MCF 10A (cell line): ENCODE measurements at regions of chr1 and their contacts with region 1.

Region 1: GRCh38 chr1:245322673-245323441 is 168.1 kb downstream of the KIF26B start:
- DNase-seq: peak; percentile 55
- H3K4me3 Mint-ChIP-seq: no peak overlapping the region
- H3K27ac Mint-ChIP-seq: no peak overlapping the region
- H3K4me1 Mint-ChIP-seq: no peaks in the 10 kb centered on the region
- H3K27me3 Mint-ChIP-seq: peaks cover 18% of the 10 kb centered on the region
- CTCF ChIP-seq: peak; percentile 46

Region 2: GRCh38 chr1:245079021-245079609 is 243.7 kb before region 1 on chr1:
- CTCF ChIA-PET with region 1: interaction called, 3 read pairs
- POLR2A ChIA-PET with region 1: no interaction called
- intact Hi-C with region 1: loop called (anchors 1 kb)
- DNase-seq: peak; percentile 73
- H3K4me3 Mint-ChIP-seq: no peak overlapping the region
- H3K27ac Mint-ChIP-seq: no peak overlapping the region
- H3K4me1 Mint-ChIP-seq: peaks cover 4% of the 10 kb centered on the region
- H3K27me3 Mint-ChIP-seq: no peaks in the 10 kb centered on the region
- CTCF ChIP-seq: peak; percentile 97

Region 3: GRCh38 chr1:245209658-245210435 is 113.0 kb before region 1 on chr1:
- CTCF ChIA-PET with region 1: no interaction called
- POLR2A ChIA-PET with region 1: no interaction called
- intact Hi-C with region 1: no loop called
- DNase-seq: no peak
- H3K4me3 Mint-ChIP-seq: no peak overlapping the region
- H3K27ac Mint-ChIP-seq: no peak overlapping the region
- H3K4me1 Mint-ChIP-seq: no peaks in the 10 kb centered on the region
- H3K27me3 Mint-ChIP-seq: no peaks in the 10 kb centered on the region
- CTCF ChIP-seq: no peak

Region 4: DNA sequence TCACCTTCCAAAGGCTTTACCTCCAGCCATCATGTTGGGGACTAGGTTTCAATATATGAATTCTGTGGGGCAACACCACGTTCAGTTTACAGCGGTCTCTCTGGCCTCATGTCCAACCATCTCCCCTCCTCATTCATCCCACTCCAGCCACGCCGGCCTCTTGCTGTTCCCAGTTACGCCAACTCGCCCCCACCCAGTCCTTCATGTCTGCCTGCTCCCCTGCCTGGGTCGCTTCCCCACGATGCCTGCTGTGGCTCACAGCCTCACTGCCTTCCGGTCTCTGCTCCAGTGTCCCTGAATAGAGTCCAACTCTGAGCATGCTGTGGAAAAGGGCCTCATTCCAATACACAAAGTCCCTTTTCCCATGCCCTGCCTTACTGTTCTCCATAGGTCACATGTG is 25.8 kb after region 1 on chr1:
- CTCF ChIA-PET with region 1: no interaction called
- POLR2A ChIA-PET with region 1: no interaction called
- intact Hi-C with region 1: no loop called
- DNase-seq: no peak
- H3K4me3 Mint-ChIP-seq: no peak overlapping the region
- H3K27ac Mint-ChIP-seq: no peak overlapping the region
- H3K4me1 Mint-ChIP-seq: no peaks in the 10 kb centered on the region
- H3K27me3 Mint-ChIP-seq: peaks cover 65% of the 10 kb centered on the region
- CTCF ChIP-seq: no peak

Region 5: DNA sequence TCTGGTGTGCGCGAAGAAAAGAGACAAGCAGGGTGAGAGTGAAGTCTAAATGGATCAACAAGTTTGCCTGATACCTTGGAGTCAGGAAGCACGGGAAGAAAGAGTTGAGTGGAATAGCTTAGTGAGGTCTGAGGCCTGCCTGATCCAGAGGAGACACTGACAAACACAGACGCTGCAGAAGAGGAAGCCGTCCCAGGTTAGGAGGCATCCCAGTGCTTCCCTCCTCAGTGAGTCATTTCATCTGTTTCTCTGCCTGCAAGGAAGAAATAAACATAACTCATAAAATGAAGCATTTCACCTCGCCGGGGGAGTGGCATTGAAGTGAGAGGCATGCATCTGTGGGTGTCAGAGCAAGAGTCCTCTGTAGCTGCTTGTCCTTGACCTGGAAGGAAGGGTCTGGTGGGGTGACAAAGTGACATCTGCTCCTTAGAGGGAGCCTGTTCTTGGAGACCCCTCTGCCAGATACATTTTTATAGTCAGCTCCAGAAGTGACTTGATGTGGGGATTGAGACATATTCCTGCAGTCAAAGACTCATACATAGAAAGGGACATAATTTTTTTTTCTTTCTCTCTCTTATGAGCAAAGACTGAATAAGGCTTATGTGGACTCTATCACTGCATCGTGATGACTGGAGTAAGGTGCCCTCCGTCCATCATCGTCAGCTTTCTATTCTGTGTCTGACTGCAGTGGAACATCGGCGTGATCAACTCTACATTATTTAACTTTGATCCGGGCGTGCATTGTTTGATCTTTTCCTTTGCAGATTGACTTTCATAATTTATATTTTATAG is 88.6 kb after region 1 on chr1:
- CTCF ChIA-PET with region 1: no interaction called
- POLR2A ChIA-PET with region 1: no interaction called
- intact Hi-C with region 1: no loop called
- DNase-seq: no peak
- H3K4me3 Mint-ChIP-seq: no peak overlapping the region
- H3K27ac Mint-ChIP-seq: no peak overlapping the region
- H3K4me1 Mint-ChIP-seq: no peaks in the 10 kb centered on the region
- H3K27me3 Mint-ChIP-seq: peaks cover 7% of the 10 kb centered on the region
- CTCF ChIP-seq: no peak

Region 6: DNA sequence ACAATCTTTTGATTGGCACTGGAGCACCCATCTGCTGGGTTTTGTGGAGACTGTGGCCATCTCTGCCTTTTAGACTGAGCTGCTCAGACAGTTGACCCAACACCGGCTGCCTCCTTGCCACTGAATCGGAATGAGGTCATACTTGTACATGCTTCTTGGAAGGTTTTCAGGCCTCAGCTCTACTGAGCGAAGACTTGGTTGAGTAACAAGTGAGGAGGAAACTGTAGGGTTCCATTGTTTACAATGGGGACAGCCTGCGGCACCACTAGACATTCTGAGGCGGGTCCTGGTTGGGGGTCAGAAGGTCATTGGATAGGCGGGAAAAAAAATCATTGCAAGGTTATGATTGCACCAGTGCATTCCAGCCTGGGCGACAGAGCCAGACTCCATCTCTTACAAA is 152.3 kb after region 1 on chr1:
- CTCF ChIA-PET with region 1: no interaction called
- POLR2A ChIA-PET with region 1: no interaction called
- intact Hi-C with region 1: no loop called
- DNase-seq: peak; percentile 58
- H3K4me3 Mint-ChIP-seq: no peak overlapping the region
- H3K27ac Mint-ChIP-seq: no peak overlapping the region
- H3K4me1 Mint-ChIP-seq: peaks cover 6% of the 10 kb centered on the region
- H3K27me3 Mint-ChIP-seq: no peaks in the 10 kb centered on the region
- CTCF ChIP-seq: no peak

Region 7: GRCh38 chr1:245986404-245987220 is 663.8 kb after region 1 on chr1:
- CTCF ChIA-PET with region 1: interaction called, 11 read pairs
- POLR2A ChIA-PET with region 1: no interaction called
- intact Hi-C with region 1: no loop called
- DNase-seq: peak; percentile 93
- H3K4me3 Mint-ChIP-seq: peak overlapping the region; percentile 12
- H3K27ac Mint-ChIP-seq: peak overlapping the region; percentile 4
- H3K4me1 Mint-ChIP-seq: peaks cover 21% of the 10 kb centered on the region
- H3K27me3 Mint-ChIP-seq: no peaks in the 10 kb centered on the region
- CTCF ChIP-seq: no peak

Region 8: GRCh38 chr1:246117066-246117791 is 794.4 kb after region 1 on chr1:
- CTCF ChIA-PET with region 1: no interaction called
- POLR2A ChIA-PET with region 1: no interaction called
- intact Hi-C with region 1: loop called (anchors 10 kb)
- DNase-seq: peak; percentile 61
- H3K4me3 Mint-ChIP-seq: no peak overlapping the region
- H3K27ac Mint-ChIP-seq: no peak overlapping the region
- H3K4me1 Mint-ChIP-seq: no peaks in the 10 kb centered on the region
- H3K27me3 Mint-ChIP-seq: no peaks in the 10 kb centered on the region
- CTCF ChIP-seq: peak; percentile 45